Heart left ventricle (tissue), 16 donors: ENCODE measurements at regions of chr17 and their contacts with region 1.

Region 1: GRCh38 chr17:70552230-70552981 is 383.1 kb downstream of the KCNJ2 start:
- DNase-seq: no peak
- ATAC-seq: peak; percentile 64 to 83 (median 75)
- H3K4me3 ChIP-seq: peak overlapping the region in 5 of 12 donors; percentile 7 to 21 (median 13)
- H3K27ac ChIP-seq: peak overlapping the region in 3 of 12 donors; percentile 7 to 13 (median 9)
- H3K4me1 ChIP-seq: peaks cover 0 to 5% (median 0%) of the 10 kb centered on the region in 12 donors
- H3K27me3 ChIP-seq: no peaks in the 10 kb centered on the region
- CTCF ChIP-seq: peak in 11 of 12 donors; percentile 45 to 69 (median 59)
- POLR2A ChIP-seq: no peak

Region 2: DNA sequence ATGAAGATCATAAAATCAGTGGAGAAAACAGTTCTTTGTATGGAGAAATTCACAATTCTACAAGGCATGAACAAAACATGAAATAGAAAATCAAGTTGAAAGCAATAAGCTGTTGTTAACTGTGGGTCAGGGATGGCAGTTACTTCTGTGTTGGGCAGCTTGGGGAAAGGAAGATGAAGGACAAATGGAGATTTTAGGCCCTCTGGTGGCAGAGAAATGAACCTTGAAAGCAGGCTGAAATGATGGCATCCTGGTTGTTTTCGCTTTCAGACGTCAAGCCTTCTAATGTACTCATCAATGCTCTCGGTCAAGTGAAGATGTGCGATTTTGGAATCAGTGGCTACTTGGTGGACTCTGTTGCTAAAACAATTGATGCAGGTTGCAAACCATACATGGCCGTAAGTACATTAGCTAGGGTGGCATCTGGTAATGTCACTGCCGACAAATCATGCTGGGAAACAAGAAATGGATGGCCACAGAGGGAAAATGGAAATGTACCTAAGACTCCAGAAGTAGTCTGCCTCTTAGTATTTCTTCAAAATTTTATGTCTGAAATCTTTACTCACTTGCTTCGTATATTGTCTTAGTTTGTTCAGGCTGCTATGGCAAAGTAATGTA is 1029.1 kb before region 1 on chr17:
- intact Hi-C with region 1: loop called in 3 of 10 experiments (anchors 5 to 10 kb)
- DNase-seq: peak in 1 of 5 donors; percentile 20
- ATAC-seq: peak in 2 of 4 donors; percentile 72 to 73
- H3K4me3 ChIP-seq: no peak overlapping the region
- H3K27ac ChIP-seq: no peak overlapping the region
- H3K4me1 ChIP-seq: no peaks in the 10 kb centered on the region
- H3K27me3 ChIP-seq: no peaks in the 10 kb centered on the region
- CTCF ChIP-seq: peak; percentile 55 to 74 (median 66)
- POLR2A ChIP-seq: no peak

Region 3: DNA sequence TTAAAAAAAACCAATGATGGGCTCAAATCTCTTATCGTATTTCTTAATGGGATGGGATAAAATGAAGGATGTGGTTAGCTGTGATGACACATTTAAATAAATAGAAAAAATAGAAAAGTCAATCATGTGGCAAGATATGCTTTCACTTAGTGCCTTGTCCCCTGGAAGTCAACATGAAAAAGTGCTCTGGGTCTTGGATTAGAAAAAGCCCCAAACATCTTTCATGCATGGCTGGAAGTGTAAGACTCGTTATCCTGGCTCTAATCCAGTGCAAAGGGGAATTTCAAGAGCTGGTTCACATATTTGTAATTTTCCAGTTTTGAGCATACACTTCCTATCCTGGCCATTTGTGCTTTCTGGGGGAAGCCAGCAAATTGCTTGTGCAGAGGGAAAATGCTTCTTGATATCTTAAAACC is 977.1 kb before region 1 on chr17:
- intact Hi-C with region 1: loop called in 2 of 10 experiments (anchors 5 kb)
- DNase-seq: no peak
- ATAC-seq: peak in 2 of 4 donors; percentile 55 to 63
- H3K4me3 ChIP-seq: no peak overlapping the region
- H3K27ac ChIP-seq: peak overlapping the region in 10 of 12 donors; percentile 3 to 58 (median 27)
- H3K4me1 ChIP-seq: peaks cover 3 to 31% (median 19%) of the 10 kb centered on the region in 12 donors
- H3K27me3 ChIP-seq: no peaks in the 10 kb centered on the region
- CTCF ChIP-seq: no peak
- POLR2A ChIP-seq: no peak

Region 4: DNA sequence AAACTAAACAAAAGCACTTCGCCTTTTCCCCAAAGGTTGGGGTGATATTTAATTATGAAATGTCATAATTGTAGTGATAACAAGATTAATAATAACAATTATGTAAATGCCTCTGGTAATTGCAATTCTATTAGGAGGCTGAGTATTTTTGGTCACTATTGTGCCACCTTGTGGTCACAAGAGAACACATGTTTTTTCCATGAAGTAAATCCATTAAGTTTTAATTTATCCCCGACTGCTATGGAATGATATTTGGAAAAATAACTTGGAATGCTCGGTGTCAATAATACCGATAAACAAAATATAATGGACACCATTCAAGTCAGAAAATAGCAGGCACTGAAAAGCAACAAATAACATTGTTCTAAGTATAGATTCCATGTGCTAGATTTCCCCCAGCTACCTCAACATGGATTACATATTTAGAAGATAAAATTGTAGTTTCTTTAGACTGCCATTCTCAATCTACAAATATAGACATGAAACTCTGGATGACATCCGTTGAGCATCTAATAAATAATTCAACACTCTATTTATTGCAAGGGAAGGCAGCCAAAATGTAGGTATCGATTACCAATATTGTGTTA is 408.1 kb before region 1 on chr17:
- intact Hi-C with region 1: loop called in 1 of 10 experiments (anchors 10 kb)
- DNase-seq: no peak
- ATAC-seq: no peak
- H3K4me3 ChIP-seq: no peak overlapping the region
- H3K27ac ChIP-seq: no peak overlapping the region
- H3K4me1 ChIP-seq: peaks cover 0 to 5% (median 0%) of the 10 kb centered on the region in 12 donors
- H3K27me3 ChIP-seq: no peaks in the 10 kb centered on the region
- CTCF ChIP-seq: peak; percentile 61 to 85 (median 74)
- POLR2A ChIP-seq: no peak

Region 5: DNA sequence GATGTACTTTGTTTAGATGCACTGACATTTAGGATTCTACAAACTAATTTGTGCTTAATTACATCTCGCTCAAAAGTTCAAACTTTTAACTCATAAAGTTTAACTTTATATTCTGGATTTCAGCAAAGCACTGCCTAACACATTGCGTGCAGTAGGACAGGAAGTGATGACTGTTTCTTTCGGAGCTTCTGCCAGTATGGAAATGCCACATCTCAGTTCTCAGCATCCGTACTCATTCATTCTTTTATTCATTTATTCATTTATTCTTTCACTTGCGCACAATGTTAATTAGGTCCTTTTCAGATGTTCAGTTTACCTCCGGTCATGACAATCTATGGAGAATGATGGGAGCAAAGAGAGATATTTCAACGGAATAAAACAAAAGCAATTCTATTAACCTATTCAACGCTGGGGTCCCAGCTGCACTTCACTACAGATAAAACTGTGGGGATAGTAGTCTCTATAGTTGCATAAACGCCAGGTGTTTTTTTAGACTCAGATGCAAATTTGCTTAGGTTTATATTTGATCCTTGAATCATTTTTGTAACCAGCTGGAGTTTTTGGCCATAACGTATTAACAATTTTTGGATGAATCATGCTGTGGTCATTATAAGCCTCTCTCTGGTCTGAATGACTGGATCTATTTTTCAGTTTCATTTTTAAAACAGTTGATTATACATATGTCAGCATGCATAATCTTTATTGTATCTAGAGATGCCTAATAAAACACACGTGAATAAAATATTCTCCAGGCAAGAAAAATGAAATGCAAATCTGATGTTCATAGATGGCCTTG is 239.2 kb before region 1 on chr17:
- intact Hi-C with region 1: loop called in 4 of 10 experiments (anchors 5 to 10 kb)
- DNase-seq: no peak
- ATAC-seq: no peak
- H3K4me3 ChIP-seq: no peak overlapping the region
- H3K27ac ChIP-seq: peak overlapping the region in 1 of 12 donors; percentile 81
- H3K4me1 ChIP-seq: peaks cover 0 to 27% (median 5%) of the 10 kb centered on the region in 12 donors
- H3K27me3 ChIP-seq: no peaks in the 10 kb centered on the region
- CTCF ChIP-seq: no peak
- POLR2A ChIP-seq: no peak

Region 6: GRCh38 chr17:70604854-70605253 is 52.4 kb after region 1 on chr17:
- intact Hi-C with region 1: no loop called
- DNase-seq: no peak
- ATAC-seq: no peak
- H3K4me3 ChIP-seq: no peak overlapping the region
- H3K27ac ChIP-seq: no peak overlapping the region
- H3K4me1 ChIP-seq: no peaks in the 10 kb centered on the region
- H3K27me3 ChIP-seq: no peaks in the 10 kb centered on the region
- CTCF ChIP-seq: no peak
- POLR2A ChIP-seq: no peak